OCI-LY7 (cell line): ENCODE measurements at regions of chr15 and their contacts with region 1.

Region 1: GRCh38 chr15:78241007-78241406 is 6.6 kb upstream of the ACSBG1 start:
- DNase-seq: peak; percentile 73
- H3K4me3 ChIP-seq: no peak overlapping the region
- H3K27ac ChIP-seq: no peak overlapping the region
- H3K4me1 ChIP-seq: no peaks in the 10 kb centered on the region
- CTCF ChIP-seq: peak; percentile 88

Region 2: GRCh38 chr15:77907824-77908751 is 332.9 kb before region 1 on chr15:
- CTCF ChIA-PET with region 1: no interaction called
- POLR2A ChIA-PET with region 1: no interaction called
- intact Hi-C with region 1: loop called (anchors 10 kb)
- DNase-seq: peak; percentile 77
- H3K4me3 ChIP-seq: no peak overlapping the region
- H3K27ac ChIP-seq: no peak overlapping the region
- H3K4me1 ChIP-seq: no peaks in the 10 kb centered on the region
- CTCF ChIP-seq: peak; percentile 77

Region 3: GRCh38 chr15:77966540-77967290 is 274.3 kb before region 1 on chr15:
- CTCF ChIA-PET with region 1: interaction called, 3 read pairs
- POLR2A ChIA-PET with region 1: interaction called, 3 read pairs
- intact Hi-C with region 1: loop called (anchors 2 kb)
- DNase-seq: peak; percentile 65
- H3K4me3 ChIP-seq: no peak overlapping the region
- H3K27ac ChIP-seq: no peak overlapping the region
- H3K4me1 ChIP-seq: peaks cover 7% of the 10 kb centered on the region
- CTCF ChIP-seq: peak; percentile 100

Region 4: GRCh38 chr15:78131295-78132061 is 109.5 kb before region 1 on chr15 and contains the start of gene CIB2:
- CTCF ChIA-PET with region 1: interaction called, 4 read pairs
- POLR2A ChIA-PET with region 1: interaction called, 6 read pairs
- intact Hi-C with region 1: loop called (anchors 5 kb)
- DNase-seq: peak; percentile 86
- H3K4me3 ChIP-seq: peak within 1 kb of the TSS; percentile 80
- H3K27ac ChIP-seq: no peak within 1 kb of the TSS
- H3K4me1 ChIP-seq: peaks cover 8% of the 10 kb centered on the region
- CTCF ChIP-seq: peak; percentile 75
- total RNA-seq, gene CIB2: 2.2 and 5.0 TPM in 2 replicates

Region 5: DNA sequence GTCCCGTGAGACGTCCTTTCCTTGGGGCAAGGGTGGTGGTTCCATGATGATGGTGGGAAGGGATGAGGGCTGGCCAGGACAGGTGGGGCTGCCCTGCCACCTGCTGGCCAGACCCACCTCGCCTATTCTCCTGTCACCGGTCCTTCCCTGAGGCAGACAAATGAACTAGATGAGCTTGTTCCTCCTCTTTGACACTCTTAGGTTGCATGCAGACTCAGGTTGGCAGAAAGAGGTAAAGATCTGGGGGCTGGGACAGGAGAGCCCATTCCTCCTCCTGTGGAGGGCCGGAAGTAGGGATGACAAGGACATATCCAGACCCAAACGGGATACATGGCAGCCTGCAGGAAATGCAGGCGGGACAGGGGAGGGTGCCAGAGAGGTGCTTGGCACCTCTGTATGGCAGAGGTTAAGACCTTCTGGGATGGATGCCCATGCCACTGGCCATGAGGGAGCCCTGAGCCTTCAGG is 45.2 kb before region 1 on chr15:
- CTCF ChIA-PET with region 1: interaction called, 4 read pairs
- POLR2A ChIA-PET with region 1: no interaction called
- intact Hi-C with region 1: loop called (anchors 1 kb)
- DNase-seq: peak; percentile 65
- H3K4me3 ChIP-seq: no peak overlapping the region
- H3K27ac ChIP-seq: no peak overlapping the region
- H3K4me1 ChIP-seq: no peaks in the 10 kb centered on the region
- CTCF ChIP-seq: peak; percentile 95

Region 6: DNA sequence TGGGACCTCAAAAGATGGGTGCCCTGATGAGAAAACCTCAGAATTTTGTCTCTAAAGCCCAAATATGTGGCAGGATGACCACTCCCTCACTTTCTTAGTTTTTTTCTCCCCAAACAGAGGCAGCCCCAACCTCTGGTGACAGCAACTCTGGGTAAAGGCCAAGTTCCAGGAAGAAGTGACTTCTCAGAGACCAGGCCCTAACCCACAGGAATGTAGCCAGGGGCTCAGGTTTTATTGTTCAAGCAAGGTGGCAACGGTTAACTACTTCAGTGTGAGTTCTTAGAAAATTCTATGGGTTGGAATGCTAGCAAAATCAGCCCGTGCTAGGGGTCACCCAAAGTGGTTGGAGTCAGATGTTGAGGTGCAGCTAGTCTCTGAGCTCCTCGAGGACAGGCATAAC is 18.2 kb after region 1 on chr15:
- CTCF ChIA-PET with region 1: no interaction called
- POLR2A ChIA-PET with region 1: no interaction called
- intact Hi-C with region 1: no loop called
- DNase-seq: no peak
- H3K4me3 ChIP-seq: no peak overlapping the region
- H3K27ac ChIP-seq: no peak overlapping the region
- H3K4me1 ChIP-seq: no peaks in the 10 kb centered on the region
- CTCF ChIP-seq: no peak